ENCODE measurements at regions of chr17 and their contacts with region 1.

Region 1: GRCh38 chr17:65794572-65794971 is 233.1 kb upstream of the AXIN2 start:
- DNase-seq: no peak
- H3K4me3 Mint-ChIP-seq: no peak overlapping the region
- H3K27ac Mint-ChIP-seq: no peak overlapping the region
- H3K4me1 Mint-ChIP-seq: peaks cover 11% of the 10 kb centered on the region
- H3K27me3 Mint-ChIP-seq: no peaks in the 10 kb centered on the region

Region 2: DNA sequence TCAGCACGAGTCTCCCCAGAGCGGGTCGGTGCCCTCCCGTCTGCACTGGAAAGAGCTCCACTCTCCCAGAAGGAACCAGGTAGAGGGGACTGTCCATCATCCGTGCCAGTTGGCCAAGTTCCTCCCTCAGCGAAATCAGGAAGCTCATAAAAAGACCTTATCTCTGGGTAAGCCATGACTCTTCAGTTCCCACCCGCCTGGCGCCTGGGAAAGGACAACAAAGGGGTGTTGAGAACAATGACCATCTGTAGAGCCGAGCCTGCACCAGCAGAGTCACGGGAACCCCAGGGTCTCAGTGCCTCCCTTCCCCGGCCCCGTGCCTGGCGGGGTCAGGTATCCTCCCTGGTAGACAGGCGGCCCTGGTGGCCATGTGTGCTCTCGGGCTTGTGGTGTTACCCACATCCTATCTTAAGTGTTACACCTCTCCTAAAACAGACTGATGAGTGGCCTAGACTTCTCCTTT is 423.9 kb before region 1 on chr17:
- CTCF ChIA-PET with region 1: no interaction called
- POLR2A ChIA-PET with region 1: no interaction called
- intact Hi-C with region 1: no loop called
- DNase-seq: no peak
- H3K4me3 Mint-ChIP-seq: no peak overlapping the region
- H3K27ac Mint-ChIP-seq: no peak overlapping the region
- H3K4me1 Mint-ChIP-seq: peaks cover 18% of the 10 kb centered on the region
- H3K27me3 Mint-ChIP-seq: peaks cover 17% of the 10 kb centered on the region

Region 3: DNA sequence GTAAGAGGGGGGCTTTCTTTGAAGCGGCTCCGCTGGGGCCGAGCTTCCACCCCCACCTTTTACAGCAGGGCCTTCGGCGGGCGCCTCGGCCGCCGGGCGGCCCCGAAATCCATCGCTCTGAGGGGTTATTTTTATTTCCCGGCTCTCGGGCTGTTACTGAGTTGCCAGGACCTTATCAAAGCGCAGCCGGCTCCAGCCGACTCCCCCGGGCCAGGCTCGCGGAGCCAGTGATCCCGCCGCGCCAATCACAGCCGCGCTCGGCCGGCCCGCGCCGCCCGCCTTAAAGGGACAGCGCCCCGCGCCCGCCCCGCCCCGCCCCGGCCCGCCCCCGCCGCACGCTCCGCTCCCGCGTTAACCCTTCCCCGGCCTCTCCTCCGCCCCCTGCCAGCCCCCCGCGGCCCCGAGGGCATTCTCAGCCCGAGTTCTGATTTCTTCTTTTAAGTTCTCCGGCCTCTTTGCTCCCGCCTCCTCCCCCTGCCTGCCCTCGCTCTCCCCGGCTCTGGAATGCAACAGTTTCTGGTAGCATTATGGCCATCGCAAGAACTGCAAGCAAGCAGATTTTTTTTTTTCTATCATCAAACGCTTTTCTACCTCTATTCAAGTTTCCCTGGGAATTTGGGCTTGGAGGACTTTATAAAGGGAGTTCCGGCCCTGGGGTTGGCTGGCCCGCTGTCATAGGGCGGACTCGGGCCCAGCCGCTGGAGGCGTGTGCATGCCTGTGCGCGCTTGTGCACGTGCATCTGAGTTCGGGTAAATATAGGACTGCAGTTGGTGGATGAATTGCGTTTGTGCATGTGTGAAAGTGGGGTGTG is 233.0 kb before region 1 on chr17 and contains the start of gene AXIN2:
- CTCF ChIA-PET with region 1: interaction called, 4 read pairs
- POLR2A ChIA-PET with region 1: no interaction called
- intact Hi-C with region 1: loop called (anchors 1 kb)
- DNase-seq: peak; percentile 91
- H3K4me3 Mint-ChIP-seq: peak within 1 kb of the TSS; percentile 70
- H3K27ac Mint-ChIP-seq: peak within 1 kb of the TSS; percentile 74
- H3K4me1 Mint-ChIP-seq: peaks cover 15% of the 10 kb centered on the region
- H3K27me3 Mint-ChIP-seq: no peaks in the 10 kb centered on the region
- total RNA-seq, gene AXIN2: 3.9 to 4.4 TPM